A549 (cell line): ENCODE measurements at regions of chr1 and their contacts with region 1.

Region 1: GRCh38 chr1:203273206-203273868 is 32.0 kb upstream of the BTG2 start:
- DNase-seq: peak; percentile 73 to 82
- ATAC-seq: peak; percentile 73 to 88
- H3K4me3 ChIP-seq: no peak overlapping the region
- H3K27ac ChIP-seq: peak overlapping the region; percentile 29 to 67; a peak in 4 of 6 replicates
- H3K4me1 ChIP-seq: peaks cover 9% of the 10 kb centered on the region
- CTCF ChIP-seq: peak; percentile 97
- EP300 ChIP-seq: no peak
- POLR2A ChIP-seq: no peak
- RAD21 ChIP-seq: peak; percentile 93 to 95

Region 2: DNA sequence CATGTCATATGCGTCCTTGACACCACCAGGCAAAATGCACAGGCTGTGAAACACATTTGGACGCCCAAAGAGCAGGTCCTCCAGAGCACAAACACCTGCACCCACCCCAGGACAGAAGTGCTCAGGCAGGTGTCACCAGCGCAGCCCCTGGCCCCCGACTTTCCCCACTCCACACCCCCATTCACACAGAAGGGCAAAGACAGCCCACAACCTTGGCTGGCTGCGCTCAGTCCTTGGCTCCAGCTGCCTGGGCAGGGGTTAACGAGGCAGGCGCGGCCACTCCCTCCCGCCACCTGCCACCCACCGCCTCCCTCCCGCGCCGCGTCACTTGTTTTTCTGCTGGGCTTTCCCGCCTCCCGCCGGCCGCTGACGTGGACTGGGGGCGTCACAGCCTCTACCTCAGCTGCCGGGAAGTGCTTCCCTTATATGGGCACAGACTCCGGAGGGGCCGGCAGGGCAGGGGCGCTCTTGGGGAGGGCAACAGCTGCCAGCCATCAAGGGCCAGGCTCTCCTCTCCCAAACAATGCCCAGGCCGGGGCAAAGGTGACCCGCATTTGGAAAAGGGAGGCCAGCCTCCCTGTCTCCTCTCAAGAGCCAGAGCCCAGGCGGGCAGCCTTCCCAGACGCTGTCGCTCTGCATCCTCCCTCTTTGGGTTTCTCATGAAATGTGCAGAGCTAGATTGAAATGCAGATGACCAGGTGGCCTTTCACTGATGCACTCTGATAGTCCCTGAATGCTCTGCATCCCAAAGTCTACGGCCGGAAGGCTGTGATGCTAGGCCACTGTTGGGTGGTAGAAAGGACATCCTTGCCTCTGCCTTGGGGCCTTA is 17.1 kb after region 1 on chr1:
- CTCF ChIA-PET with region 1: interaction called, 175 read pairs
- POLR2A ChIA-PET with region 1: no interaction called
- DNase-seq: no peak
- ATAC-seq: no peak
- H3K4me3 ChIP-seq: no peak overlapping the region
- H3K27ac ChIP-seq: 0 out of 6 replicates have a peak overlapping the region, but pooled peaks of 1 of the 2 experiments have one; percentile 1
- H3K4me1 ChIP-seq: peaks cover 14% of the 10 kb centered on the region
- CTCF ChIP-seq: no peak
- EP300 ChIP-seq: no peak
- POLR2A ChIP-seq: no peak
- RAD21 ChIP-seq: no peak

Region 3: GRCh38 chr1:203299169-203299568 is 25.8 kb after region 1 on chr1:
- CTCF ChIA-PET with region 1: interaction called, 36 read pairs
- POLR2A ChIA-PET with region 1: no interaction called
- DNase-seq: no peak
- ATAC-seq: no peak
- H3K4me3 ChIP-seq: no peak overlapping the region
- H3K27ac ChIP-seq: no peak overlapping the region
- H3K4me1 ChIP-seq: no peaks in the 10 kb centered on the region
- CTCF ChIP-seq: no peak
- EP300 ChIP-seq: no peak
- POLR2A ChIP-seq: no peak
- RAD21 ChIP-seq: no peak

Region 4: GRCh38 chr1:203304919-203305808 is 31.8 kb after region 1 on chr1 and contains the start of gene BTG2:
- CTCF ChIA-PET with region 1: interaction called, 75 read pairs
- POLR2A ChIA-PET with region 1: interaction called, 7 read pairs
- DNase-seq: peak; percentile 84 to 95
- ATAC-seq: peak; percentile 87 to 94
- H3K4me3 ChIP-seq: peak within 1 kb of the TSS; percentile 93
- H3K27ac ChIP-seq: peak within 1 kb of the TSS; percentile 91 to 97
- H3K4me1 ChIP-seq: peaks cover 24% of the 10 kb centered on the region
- CTCF ChIP-seq: no peak
- EP300 ChIP-seq: no peak
- POLR2A ChIP-seq: peak; percentile 99
- RAD21 ChIP-seq: no peak; a peak in 1 of 5 replicates
- polyA plus RNA-seq, gene BTG2: 16.0 and 16.4 TPM in 2 replicates

Region 5: DNA sequence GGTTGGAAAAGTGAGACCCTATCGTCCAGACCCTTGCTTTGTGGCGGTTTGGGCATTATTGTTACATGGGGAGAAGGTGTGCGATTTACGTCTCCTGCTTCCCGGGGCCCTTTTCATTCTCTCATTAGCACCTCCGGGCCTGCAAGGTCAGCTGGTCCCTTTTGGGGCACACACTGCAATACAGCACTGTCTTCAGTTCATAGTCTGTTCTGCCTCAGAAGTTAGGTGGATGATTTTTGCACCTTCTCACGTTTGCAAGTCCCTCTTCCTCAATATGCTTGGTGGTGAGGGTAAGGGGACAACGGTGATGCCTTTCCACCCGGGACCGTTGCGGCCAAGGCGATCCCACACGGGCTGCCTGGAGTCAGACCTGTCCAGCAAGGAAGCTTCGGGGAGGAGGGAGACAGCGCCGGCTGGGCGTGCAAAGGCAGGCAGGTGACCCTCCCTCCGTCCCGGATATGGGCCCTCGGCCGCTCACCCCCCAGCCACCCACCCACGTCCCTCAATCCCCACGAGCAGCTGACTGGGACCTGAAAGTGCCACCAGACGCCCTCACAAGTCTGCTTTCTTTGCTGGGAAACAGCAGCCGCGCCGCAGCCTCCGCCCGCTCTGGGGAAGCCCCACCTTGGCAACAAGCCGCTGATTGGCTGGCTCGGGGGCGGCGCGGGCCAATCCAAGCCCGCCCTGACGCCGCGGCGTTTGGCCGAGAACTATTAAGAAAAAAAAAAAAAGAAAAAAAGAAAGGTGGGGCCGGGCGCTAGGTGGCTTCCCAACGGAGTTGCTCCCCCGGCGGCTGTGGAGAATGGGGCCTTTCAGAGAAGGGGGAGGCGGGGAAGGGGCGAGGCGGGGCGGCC is 53.7 kb after region 1 on chr1:
- CTCF ChIA-PET with region 1: interaction called, 510 read pairs
- POLR2A ChIA-PET with region 1: interaction called, 9 read pairs
- DNase-seq: peak; percentile 87 to 95
- ATAC-seq: peak; percentile 86 to 97
- H3K4me3 ChIP-seq: peak overlapping the region; percentile 49
- H3K27ac ChIP-seq: peak overlapping the region; percentile 88 to 92
- H3K4me1 ChIP-seq: peaks cover 27% of the 10 kb centered on the region
- CTCF ChIP-seq: no peak
- EP300 ChIP-seq: no peak
- POLR2A ChIP-seq: peak; percentile 64
- RAD21 ChIP-seq: no peak

Region 6: DNA sequence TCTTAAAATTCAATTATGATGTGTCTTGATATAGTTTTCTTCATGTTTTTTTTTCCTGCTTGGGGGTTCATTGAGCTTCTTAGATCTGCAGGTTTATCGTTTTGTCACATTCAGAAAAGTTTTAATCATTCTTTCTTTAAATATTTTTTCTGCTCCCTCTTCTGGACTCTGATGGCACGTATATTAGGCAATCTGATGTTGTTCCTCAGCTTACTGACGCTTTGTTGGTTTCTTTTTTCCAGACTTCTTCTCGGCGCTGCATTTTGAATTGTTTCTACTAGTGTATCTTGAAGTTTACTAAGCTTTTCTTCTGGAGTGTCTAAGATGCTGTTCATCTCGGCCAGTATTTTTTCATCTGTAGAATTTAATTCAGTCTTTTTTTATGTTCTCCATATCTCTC is 122.4 kb after region 1 on chr1:
- CTCF ChIA-PET with region 1: no interaction called
- POLR2A ChIA-PET with region 1: no interaction called
- DNase-seq: no peak
- ATAC-seq: no peak
- H3K4me3 ChIP-seq: no peak overlapping the region
- H3K27ac ChIP-seq: no peak overlapping the region
- H3K4me1 ChIP-seq: no peaks in the 10 kb centered on the region
- CTCF ChIP-seq: no peak
- EP300 ChIP-seq: no peak
- POLR2A ChIP-seq: no peak
- RAD21 ChIP-seq: no peak